ENCODE measurements at regions of chr6 and their contacts with region 1.

Region 1: GRCh38 chr6:151403919-151404308 is 12.6 kb upstream of the ZBTB2 start:
- DNase-seq: no peak
- H3K4me3 Mint-ChIP-seq: no peak overlapping the region
- H3K27ac Mint-ChIP-seq: no peak overlapping the region
- H3K4me1 Mint-ChIP-seq: peaks cover 35% of the 10 kb centered on the region
- H3K27me3 Mint-ChIP-seq: no peaks in the 10 kb centered on the region

Region 2: GRCh38 chr6:151392038-151392413 is 11.9 kb before region 1 on chr6:
- CTCF ChIA-PET with region 1: interaction called, 17 read pairs
- POLR2A ChIA-PET with region 1: no interaction called
- DNase-seq: peak; percentile 61
- H3K4me3 Mint-ChIP-seq: peak overlapping the region; percentile 98
- H3K27ac Mint-ChIP-seq: peak overlapping the region; percentile 98
- H3K4me1 Mint-ChIP-seq: peaks cover 48% of the 10 kb centered on the region
- H3K27me3 Mint-ChIP-seq: no peaks in the 10 kb centered on the region

Region 3: DNA sequence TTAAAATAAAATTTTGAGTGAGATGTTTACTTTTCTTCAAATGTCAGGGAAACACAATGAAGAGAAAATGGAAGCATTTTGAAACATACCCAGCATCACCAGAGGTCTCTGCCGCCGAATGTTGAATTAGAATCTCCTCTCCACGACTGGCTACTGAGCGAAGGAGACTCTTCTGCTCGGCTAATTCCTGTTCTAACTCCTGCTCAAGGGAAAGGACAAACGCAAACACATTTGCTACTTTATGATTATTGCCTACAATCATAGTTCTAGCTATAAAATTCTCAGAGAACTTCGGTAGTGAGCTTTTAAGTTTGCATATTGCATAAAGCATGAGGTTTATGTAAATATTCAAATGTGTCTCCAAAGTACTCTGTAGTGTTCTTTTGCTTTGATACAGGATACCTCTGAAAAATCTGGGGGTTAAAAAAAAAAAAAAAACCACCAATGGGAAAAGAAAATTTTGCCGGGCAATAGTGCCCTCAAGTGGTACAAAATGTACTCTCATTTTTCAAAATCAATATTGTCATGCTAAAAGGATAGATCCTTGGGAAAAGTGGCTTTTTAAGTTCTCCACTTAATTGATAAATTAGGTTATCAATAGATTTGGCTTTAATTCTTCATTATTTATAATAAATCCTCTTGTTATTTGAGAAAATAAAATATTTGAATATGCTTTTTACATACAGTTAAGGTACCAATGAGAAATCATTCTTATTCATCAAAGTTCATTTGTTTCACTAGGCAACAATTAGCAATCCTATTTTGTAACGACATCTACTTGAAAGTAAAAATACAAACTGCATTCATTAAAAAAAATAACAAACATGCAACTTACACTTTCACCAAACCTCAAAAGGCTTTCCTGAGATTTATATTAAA is 864.3 kb after region 1 on chr6:
- CTCF ChIA-PET with region 1: no interaction called
- POLR2A ChIA-PET with region 1: no interaction called
- DNase-seq: peak; percentile 37
- H3K4me3 Mint-ChIP-seq: no peak overlapping the region
- H3K27ac Mint-ChIP-seq: no peak overlapping the region
- H3K4me1 Mint-ChIP-seq: peaks cover 14% of the 10 kb centered on the region
- H3K27me3 Mint-ChIP-seq: no peaks in the 10 kb centered on the region